ENCODE measurements at regions of chr11 and their contacts with region 1.

Region 1: DNA sequence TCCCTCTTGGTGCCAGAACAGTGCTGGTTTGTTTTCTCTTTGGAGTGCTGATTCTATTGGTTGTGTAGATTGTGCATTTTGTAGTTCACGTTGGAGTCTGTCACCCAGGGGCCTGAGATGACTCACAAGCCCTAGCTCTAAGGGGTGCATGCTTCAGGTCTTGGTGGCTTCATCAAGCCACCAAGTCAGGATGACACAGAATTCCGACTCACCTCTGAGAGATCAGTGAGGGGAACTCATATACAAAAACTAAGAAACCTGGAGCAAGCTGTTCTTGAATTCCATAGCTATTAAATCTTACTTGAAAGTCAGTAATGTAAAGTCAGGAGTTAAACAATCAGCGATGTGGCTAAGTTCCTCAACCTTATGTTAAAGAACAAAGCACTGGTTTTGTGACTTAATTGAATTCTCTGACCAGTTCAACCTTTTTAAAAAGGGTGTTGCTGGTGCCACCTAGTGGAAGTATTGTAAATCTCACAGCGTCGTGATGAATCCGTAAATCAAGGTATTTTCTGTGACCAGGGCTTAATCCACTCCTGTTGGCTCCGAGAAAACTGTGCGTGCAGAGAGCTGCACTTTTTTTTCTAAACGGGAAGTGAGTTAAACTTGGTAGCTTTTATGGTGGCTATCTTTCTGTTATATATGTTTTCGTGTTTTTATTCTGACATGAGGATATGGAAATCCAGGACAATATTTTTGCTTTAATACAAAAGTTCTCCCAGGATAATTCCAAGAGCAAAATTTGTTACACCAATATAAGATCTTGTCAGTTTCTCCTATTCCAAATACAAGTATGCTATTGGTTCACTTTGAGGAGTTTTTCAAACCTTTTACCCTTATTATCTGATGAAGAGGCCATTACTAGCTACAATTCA is 14.6 kb downstream of the MMP13 start:
- DNase-seq: no peak
- H3K4me3 ChIP-seq: no peak overlapping the region
- H3K27ac ChIP-seq: no peak overlapping the region
- H3K4me1 ChIP-seq: peaks cover 0 to 11% (median 6%) of the 10 kb centered on the region in 4 donors
- H3K27me3 ChIP-seq: no peaks in the 10 kb centered on the region
- CTCF ChIP-seq: peak; percentile 63 to 86 (median 70)
- EP300 ChIP-seq: no peak
- POLR2A ChIP-seq: no peak

Region 2: GRCh38 chr11:101617735-101618332 is 1323.1 kb before region 1 on chr11:
- intact Hi-C with region 1: no loop called
- DNase-seq: no peak
- H3K4me3 ChIP-seq: no peak overlapping the region
- H3K27ac ChIP-seq: no peak overlapping the region
- H3K4me1 ChIP-seq: no peaks in the 10 kb centered on the region
- H3K27me3 ChIP-seq: no peaks in the 10 kb centered on the region
- CTCF ChIP-seq: no peak
- EP300 ChIP-seq: no peak
- POLR2A ChIP-seq: no peak

Region 3: GRCh38 chr11:102757823-102758549 is 183.0 kb before region 1 on chr11:
- intact Hi-C with region 1: no loop called
- DNase-seq: no peak
- H3K4me3 ChIP-seq: no peak overlapping the region
- H3K27ac ChIP-seq: no peak overlapping the region
- H3K4me1 ChIP-seq: peaks cover 0 to 21% (median 6%) of the 10 kb centered on the region in 4 donors
- H3K27me3 ChIP-seq: no peaks in the 10 kb centered on the region
- CTCF ChIP-seq: no peak
- EP300 ChIP-seq: no peak
- POLR2A ChIP-seq: no peak

Region 4: GRCh38 chr11:102810945-102811660 is 129.8 kb before region 1 on chr11:
- intact Hi-C with region 1: loop called (anchors 2 kb)
- DNase-seq: no peak
- H3K4me3 ChIP-seq: no peak overlapping the region
- H3K27ac ChIP-seq: no peak overlapping the region
- H3K4me1 ChIP-seq: no peaks in the 10 kb centered on the region
- H3K27me3 ChIP-seq: no peaks in the 10 kb centered on the region
- CTCF ChIP-seq: peak in 1 of 4 experiments; percentile 41
- EP300 ChIP-seq: no peak
- POLR2A ChIP-seq: no peak

Region 5: DNA sequence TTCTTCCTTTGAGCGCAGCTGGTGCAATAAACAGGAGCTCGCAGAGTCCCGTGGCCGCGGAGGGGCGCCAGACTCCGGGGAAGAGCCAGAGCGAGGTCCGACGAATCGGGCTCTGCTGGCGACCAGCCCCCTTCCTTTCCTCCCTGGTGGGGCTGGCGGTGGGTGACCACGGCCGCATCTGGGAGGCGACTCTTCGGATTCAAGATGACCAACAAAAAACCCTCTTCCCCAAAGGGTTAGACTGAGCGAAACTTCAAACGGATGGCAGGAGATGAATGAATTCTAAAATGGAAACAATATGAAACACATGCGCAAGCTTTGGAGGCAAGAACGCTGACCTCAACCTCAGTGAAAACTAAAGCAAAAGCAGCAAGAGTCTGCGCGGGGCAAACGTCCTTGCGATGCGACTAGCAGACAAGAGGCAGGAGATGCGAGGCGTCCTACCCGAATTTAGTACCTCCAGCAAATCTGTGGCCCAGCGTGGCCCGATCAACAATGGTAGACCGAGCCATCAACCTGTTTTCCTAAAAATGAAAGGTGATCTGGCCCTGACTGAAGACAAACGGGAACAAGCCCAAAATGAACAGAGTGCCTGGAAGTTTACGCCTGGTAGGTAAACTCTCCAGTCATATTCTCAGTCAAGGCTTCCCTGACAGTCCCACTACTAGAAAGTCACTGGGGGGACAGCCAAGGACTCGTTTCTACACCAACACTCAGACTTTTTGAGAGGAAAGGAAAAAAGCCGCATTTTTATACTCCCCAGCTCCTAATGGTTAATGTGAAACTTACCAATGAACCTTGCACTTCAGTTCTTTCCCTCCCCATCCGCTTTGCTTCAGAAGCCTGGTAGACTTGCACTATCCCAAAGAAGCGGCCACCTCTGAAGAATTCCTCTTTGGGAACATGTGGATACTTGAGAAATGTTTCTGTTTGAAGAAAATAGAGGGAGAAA is 109.2 kb before region 1 on chr11:
- intact Hi-C with region 1: loop called (anchors 5 kb)
- DNase-seq: peak; percentile 70
- H3K4me3 ChIP-seq: peak overlapping the region in 3 of 4 donors; percentile 36 to 45 (median 36)
- H3K27ac ChIP-seq: peak overlapping the region in 3 of 4 donors; percentile 43 to 63 (median 44)
- H3K4me1 ChIP-seq: peaks cover 0 to 20% (median 11%) of the 10 kb centered on the region in 4 donors
- H3K27me3 ChIP-seq: no peaks in the 10 kb centered on the region
- CTCF ChIP-seq: peak in 3 of 4 experiments; percentile 39 to 50 (median 49)
- EP300 ChIP-seq: no peak
- POLR2A ChIP-seq: no peak

Region 6: DNA sequence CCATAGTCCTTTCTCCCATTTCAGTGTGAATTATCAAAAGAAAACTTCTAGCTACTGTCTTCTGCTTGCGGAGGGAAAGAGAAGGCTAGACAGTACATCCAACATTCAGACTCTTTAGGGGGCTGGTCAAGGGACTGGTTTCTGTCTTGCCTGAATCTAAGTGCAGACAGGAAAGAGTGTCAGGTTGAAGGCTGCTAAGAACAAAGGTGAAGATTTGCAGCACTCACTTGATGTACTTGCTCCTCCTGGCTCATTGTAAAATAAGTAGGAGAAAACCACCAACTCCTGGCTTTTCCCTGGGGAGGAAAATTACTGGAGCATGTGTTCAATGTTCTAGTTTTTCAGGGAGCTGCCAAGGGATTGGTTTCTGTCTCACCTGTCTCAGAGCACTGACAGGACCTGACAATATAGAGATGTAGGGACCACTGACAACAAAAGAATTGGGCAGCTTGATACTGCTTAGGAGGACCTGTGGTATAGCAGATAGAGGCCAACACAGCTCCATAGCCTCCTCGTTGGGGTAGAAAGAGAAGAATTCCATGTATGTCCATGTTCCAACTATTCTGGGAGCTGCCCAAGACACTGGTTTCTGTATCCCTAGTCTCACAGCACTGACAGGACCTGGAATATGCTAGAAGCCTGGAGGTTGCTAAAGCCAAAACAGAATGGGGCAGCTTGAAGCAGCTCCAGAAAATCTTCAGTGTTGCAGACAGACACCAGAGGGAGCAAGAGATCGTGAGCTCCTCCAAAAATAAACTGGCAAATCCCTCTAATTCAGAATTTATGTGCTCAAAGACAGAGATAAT is 26.5 kb before region 1 on chr11:
- intact Hi-C with region 1: loop called (anchors 2 kb)
- DNase-seq: peak; percentile 66
- H3K4me3 ChIP-seq: no peak overlapping the region
- H3K27ac ChIP-seq: peak overlapping the region in 3 of 4 donors; percentile 64 to 75 (median 75)
- H3K4me1 ChIP-seq: peaks cover 0 to 37% (median 11%) of the 10 kb centered on the region in 4 donors
- H3K27me3 ChIP-seq: no peaks in the 10 kb centered on the region
- CTCF ChIP-seq: peak in 3 of 4 experiments; percentile 54 to 62 (median 62)
- EP300 ChIP-seq: peak in 1 of 4 donors; percentile 24
- POLR2A ChIP-seq: no peak

Region 7: GRCh38 chr11:104033134-104033533 is 1092.2 kb after region 1 on chr11:
- intact Hi-C with region 1: no loop called
- DNase-seq: no peak
- H3K4me3 ChIP-seq: no peak overlapping the region
- H3K27ac ChIP-seq: no peak overlapping the region
- H3K4me1 ChIP-seq: peaks cover 0 to 10% (median 7%) of the 10 kb centered on the region in 4 donors
- H3K27me3 ChIP-seq: no peaks in the 10 kb centered on the region
- CTCF ChIP-seq: no peak
- EP300 ChIP-seq: no peak
- POLR2A ChIP-seq: no peak